Right ventricle myocardium inferior (tissue), 1 donor: ENCODE measurements at regions of chr14 and their contacts with region 1.

Region 1: GRCh38 chr14:53875324-53875897 is 81.2 kb downstream of the BMP4 start:
- DNase-seq: no peak
- ATAC-seq: peak; percentile 69

Region 2: GRCh38 chr14:53715193-53715721 is 160.2 kb before region 1 on chr14:
- intact Hi-C with region 1: loop called (anchors 10 kb)
- DNase-seq: no peak
- ATAC-seq: peak; percentile 83

Region 3: GRCh38 chr14:53793790-53794505 is 81.5 kb before region 1 on chr14:
- intact Hi-C with region 1: loop called (anchors 10 kb)
- DNase-seq: no peak
- ATAC-seq: peak; percentile 26

Region 4: DNA sequence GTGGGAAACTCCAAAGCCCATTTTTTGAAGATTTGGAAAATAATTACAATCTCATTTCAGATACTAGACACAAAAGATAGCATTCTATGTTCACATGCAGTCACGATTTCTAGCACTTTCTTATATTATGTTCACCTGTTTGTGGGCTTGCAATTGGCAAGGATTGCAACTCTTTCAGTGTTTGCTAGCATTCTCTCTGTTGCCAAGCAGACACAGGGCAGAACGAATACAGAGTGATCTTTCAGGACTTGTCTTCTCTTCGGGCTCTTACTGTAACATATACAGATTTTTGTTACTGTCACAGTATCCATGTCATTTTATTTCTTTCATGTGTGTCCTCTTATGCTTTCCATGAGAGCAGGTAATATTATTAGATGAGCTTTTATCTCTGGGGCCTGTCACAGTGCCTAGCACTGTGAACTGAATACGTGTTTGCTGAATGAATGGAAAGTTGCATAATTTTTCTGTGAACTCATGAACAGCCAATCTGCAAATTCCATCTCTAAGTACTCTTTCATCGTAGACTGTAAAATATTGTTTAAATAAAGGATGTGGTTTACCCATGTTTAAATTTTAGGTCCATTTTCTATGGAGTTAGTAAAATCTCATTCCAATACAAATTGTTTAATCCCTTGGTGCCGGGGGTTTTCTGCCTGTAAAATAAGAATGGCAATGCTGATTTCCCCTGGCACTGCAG is 23.9 kb before region 1 on chr14:
- intact Hi-C with region 1: no loop called
- DNase-seq: no peak
- ATAC-seq: no peak